ENCODE measurements at regions of chr6 and their contacts with region 1.

Region 1: DNA sequence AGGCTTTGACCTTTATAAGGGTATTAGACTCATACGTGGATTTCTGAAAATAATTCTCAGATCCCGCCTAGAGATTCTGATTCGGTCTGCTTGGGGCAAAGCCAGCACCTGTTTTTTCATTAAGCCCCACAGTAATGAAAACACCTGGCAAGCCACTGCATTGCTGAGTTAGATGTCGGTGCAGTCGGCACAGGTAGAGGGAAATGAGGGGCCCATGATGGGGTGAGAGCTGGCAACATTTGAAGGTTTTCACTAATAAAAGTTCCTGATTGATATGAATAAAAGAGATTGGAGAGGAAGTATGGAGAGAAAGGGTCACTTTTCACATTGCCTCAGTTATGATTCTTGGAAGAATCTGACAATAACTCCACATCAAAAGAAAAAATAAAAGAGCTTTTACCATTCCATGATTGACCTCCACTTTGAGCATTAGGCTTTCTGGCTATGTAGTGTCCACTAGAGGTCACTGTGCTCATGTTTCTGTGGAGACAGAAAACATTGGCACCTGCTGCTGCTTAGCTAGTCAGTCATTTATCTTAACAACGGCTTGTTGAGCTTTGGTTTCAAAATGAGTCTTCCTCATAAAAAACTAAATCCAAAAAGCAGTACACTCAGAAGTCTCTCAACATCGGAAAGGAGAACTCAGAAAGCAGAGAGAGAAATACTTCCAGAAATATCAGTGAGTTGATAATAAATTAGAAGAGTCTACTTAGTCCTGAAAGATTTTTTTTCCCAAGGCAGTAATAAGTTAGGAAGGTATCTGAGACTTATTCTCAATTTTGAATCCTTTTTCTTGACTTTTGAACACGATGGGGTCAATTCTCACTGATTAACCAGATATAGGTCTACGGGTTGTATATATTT is 53.3 kb upstream of the KLHL31 start:
- DNase-seq: peak; percentile 48
- H3K4me3 ChIP-seq: no peak overlapping the region
- H3K27ac ChIP-seq: no peak overlapping the region
- H3K27me3 ChIP-seq: no peaks in the 10 kb centered on the region
- CTCF ChIP-seq: peak; percentile 83

Region 2: GRCh38 chr6:53651764-53652401 is 66.9 kb before region 1 on chr6:
- CTCF ChIA-PET with region 1: interaction called, 13 read pairs
- POLR2A ChIA-PET with region 1: no interaction called
- DNase-seq: no peak
- H3K4me3 ChIP-seq: peak overlapping the region; percentile 75
- H3K27ac ChIP-seq: no peak overlapping the region
- H3K27me3 ChIP-seq: no peaks in the 10 kb centered on the region
- CTCF ChIP-seq: peak; percentile 24

Region 3: GRCh38 chr6:53673162-53673683 is 45.6 kb before region 1 on chr6:
- CTCF ChIA-PET with region 1: interaction called, 14 read pairs
- POLR2A ChIA-PET with region 1: no interaction called
- DNase-seq: peak; percentile 46
- H3K4me3 ChIP-seq: no peak overlapping the region
- H3K27ac ChIP-seq: no peak overlapping the region
- H3K27me3 ChIP-seq: no peaks in the 10 kb centered on the region
- CTCF ChIP-seq: no peak

Region 4: DNA sequence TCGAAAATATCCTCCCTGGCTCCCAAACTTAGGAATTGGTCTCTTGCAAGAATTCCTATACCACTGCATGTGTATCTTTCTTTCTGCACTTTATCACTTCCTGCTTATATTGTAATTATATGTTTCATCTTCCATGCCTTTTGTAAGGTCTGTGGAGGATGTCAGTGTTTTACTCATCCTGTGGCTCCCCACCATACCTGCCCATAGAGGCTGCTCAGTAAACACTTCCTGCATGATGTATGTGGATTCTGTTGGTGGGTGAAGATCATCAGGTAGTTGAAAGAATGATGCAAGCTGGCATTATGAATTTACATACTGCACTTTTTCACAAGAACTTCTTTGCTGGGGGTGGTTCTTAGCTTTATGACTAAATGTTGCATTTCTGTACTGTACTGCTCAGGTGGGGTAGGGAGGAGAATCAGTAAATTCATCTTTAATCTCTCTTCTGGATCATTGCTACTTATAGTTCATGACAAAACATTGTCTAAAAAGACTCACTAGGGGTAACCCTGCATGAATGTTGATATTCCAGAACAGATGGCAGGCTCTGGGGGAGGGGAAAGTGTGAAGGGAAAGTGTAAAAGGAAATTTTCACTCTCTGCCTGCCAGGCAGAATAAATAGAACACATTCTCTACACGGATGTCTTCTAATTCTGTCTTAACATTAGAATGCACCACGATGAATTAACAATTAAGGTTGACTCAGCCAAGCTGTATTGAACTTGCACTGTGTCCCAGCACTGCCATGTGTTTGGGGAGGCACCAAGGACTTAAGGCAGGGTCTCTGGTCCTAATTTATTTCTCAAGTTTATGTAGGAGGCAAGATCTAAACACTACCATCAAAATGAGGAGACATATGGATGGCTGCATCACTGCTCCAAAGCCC is 17.3 kb before region 1 on chr6:
- CTCF ChIA-PET with region 1: interaction called, 47 read pairs
- POLR2A ChIA-PET with region 1: no interaction called
- DNase-seq: no peak
- H3K4me3 ChIP-seq: no peak overlapping the region
- H3K27ac ChIP-seq: no peak overlapping the region
- H3K27me3 ChIP-seq: peaks cover 12% of the 10 kb centered on the region
- CTCF ChIP-seq: no peak

Region 5: GRCh38 chr6:53752856-53753255 is 34.0 kb after region 1 on chr6:
- CTCF ChIA-PET with region 1: interaction called, 11 read pairs
- POLR2A ChIA-PET with region 1: no interaction called
- DNase-seq: peak; percentile 7
- H3K4me3 ChIP-seq: no peak overlapping the region
- H3K27ac ChIP-seq: no peak overlapping the region
- H3K27me3 ChIP-seq: no peaks in the 10 kb centered on the region
- CTCF ChIP-seq: no peak

Measured in AG04450 (cell line).